Motor neuron (in vitro differentiated cells): ENCODE measurements at regions of chr2 and their contacts with region 1.

Region 1: GRCh38 chr2:224357098-224357901 is 44.6 kb downstream of the FAM124B start:
- ATAC-seq: peak; percentile 43 to 92 (median 70)
- H3K4me3 ChIP-seq: no peak overlapping the region
- H3K27ac ChIP-seq: no peak overlapping the region
- H3K4me1 ChIP-seq: no peaks in the 10 kb centered on the region

Region 2: DNA sequence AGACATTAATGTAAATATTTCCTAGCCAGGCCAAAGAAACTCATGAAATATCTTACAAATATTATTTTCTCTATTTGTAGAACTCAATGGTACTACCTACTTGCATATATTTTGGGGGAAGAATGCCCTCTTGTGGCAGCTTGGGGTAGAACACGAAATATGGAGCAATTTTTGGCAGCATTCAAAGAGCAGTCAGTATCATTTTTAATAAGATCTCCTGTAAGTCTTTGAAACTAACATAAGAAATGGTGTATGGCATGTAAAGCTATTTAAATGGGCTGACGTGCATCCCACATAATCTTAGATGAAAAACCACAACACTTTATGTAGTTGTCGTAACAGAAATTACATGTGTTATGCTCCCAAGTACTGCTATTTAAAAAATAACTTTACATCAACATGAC is 421.2 kb after region 1 on chr2:
- in situ Hi-C with region 1: loop called in 4 of 9 experiments (anchors 25 kb)
- ATAC-seq: peak in 4 of 8 experiments; percentile 23 to 56 (median 28)
- H3K4me3 ChIP-seq: no peak overlapping the region
- H3K27ac ChIP-seq: no peak overlapping the region
- H3K4me1 ChIP-seq: peaks cover 9 to 16% of the 10 kb centered on the region in 2 donors